ENCODE measurements at regions of chr4 and their contacts with region 1.

Region 1: DNA sequence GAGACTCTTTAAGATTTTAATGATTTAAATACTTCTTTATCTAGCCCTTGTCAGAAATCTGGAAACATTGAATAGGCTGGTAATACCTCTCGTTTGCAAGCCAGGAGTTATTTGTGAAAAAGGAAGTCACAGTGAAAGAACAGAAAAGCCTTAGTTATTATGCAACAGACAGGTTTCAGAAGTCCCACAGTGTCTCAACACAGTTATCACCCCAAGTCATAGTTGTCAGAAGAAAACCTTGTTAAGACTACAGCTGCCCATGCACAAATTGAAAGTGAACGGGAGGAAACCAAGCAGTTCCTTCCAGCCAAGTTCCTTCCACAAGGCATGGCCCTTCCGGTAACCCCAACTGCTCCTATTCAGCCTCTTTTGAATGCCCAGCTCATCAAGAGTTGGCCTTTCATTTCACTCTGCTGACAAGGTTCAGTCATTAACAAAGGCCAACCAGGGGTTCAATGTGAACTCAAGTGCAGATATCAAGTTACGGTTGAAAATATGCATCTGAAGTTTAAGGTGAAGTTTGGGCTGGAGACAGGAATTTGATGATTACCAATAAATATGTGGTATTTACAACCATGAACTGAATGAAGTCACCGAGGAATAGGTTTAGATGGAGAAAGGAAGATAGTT is 15.6 kb downstream of the ALPK1 start:
- DNase-seq: no peak
- ATAC-seq: no peak
- H3K4me3 ChIP-seq: no peak overlapping the region
- H3K4me3 Mint-ChIP-seq: no peak overlapping the region
- H3K27ac ChIP-seq: no peak overlapping the region
- H3K27ac Mint-ChIP-seq: no peak overlapping the region
- H3K4me1 ChIP-seq: no peaks in the 10 kb centered on the region
- H3K4me1 Mint-ChIP-seq: peaks cover 18% of the 10 kb centered on the region
- H3K27me3 ChIP-seq: no peaks in the 10 kb centered on the region
- H3K27me3 Mint-ChIP-seq: no peaks in the 10 kb centered on the region
- CTCF ChIP-seq: no peak

Region 2: DNA sequence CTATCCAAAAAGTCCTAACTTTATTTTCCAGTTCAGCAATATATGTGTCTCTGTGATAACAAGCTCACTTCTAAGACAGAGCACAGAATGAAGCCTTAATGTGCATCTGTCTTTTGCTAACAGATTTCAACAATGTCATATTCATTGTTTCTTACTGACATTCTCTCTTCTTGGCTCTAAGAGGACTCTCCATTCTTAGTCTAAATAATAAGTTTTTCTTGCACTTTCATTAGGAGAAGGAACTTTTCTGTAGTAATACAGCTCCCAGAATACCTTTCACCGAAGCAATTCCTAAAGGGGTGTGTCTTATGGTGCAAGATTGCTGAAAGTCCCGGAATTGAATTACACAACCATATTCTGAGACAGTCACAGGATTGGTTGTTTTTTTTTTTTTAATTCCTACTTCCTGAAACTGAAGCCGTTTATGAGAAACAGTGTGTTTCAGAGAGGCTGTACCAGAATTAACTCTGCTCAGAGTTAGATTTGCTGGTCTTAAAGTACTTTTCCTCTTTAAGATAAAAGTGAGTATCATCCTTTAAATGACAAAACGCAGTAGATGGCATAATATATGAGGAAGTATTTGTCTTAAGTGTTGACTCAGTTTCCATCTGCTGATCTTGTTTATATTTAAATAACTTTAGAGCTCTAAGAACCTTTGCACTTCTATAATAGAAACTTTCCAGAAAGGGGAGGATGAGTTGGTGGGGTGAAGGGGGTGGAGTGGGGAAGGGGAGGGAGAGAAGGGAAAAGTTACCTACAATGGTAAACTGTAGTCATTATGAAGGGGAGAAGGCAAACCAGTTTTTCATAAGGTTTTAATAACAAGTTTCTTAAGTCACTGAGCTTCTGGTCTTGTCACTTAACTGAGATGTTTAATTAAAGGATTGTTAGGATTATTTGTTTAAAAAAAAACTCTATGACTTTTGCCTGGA is 15.5 kb before region 1 on chr4 and contains the start of gene ALPK1:
- CTCF ChIA-PET with region 1: no interaction called
- POLR2A ChIA-PET with region 1: interaction called, 3 read pairs
- intact Hi-C with region 1: loop called in 1 of 2 experiments (anchors 1 kb)
- DNase-seq: peak in 2 of 9 experiments; percentile 53 to 72
- ATAC-seq: peak; percentile 90
- H3K4me3 ChIP-seq: peak within 1 kb of the TSS; percentile 9 to 21
- H3K4me3 Mint-ChIP-seq: peak within 1 kb of the TSS; percentile 85
- H3K27ac ChIP-seq: peak within 1 kb of the TSS; percentile 16 to 24
- H3K27ac Mint-ChIP-seq: peak within 1 kb of the TSS; percentile 87
- H3K4me1 ChIP-seq: peaks cover 26% of the 10 kb centered on the region
- H3K4me1 Mint-ChIP-seq: peaks cover 24% of the 10 kb centered on the region
- H3K27me3 ChIP-seq: no peaks in the 10 kb centered on the region
- H3K27me3 Mint-ChIP-seq: no peaks in the 10 kb centered on the region
- CTCF ChIP-seq: no peak
- total RNA-seq, gene ALPK1: 6.5 to 7.0 TPM

Region 3: GRCh38 chr4:112589206-112589605 is 276.5 kb after region 1 on chr4:
- CTCF ChIA-PET with region 1: no interaction called
- POLR2A ChIA-PET with region 1: no interaction called
- intact Hi-C with region 1: no loop called
- DNase-seq: no peak
- ATAC-seq: no peak
- H3K4me3 ChIP-seq: no peak overlapping the region
- H3K4me3 Mint-ChIP-seq: no peak overlapping the region
- H3K27ac ChIP-seq: no peak overlapping the region
- H3K27ac Mint-ChIP-seq: no peak overlapping the region
- H3K4me1 ChIP-seq: no peaks in the 10 kb centered on the region
- H3K4me1 Mint-ChIP-seq: no peaks in the 10 kb centered on the region
- H3K27me3 ChIP-seq: no peaks in the 10 kb centered on the region
- H3K27me3 Mint-ChIP-seq: no peaks in the 10 kb centered on the region
- CTCF ChIP-seq: no peak

Measured in CD8-positive, alpha-beta T cell (primary cell).